Esophagus muscularis mucosa (tissue), 4 donors: ENCODE measurements at regions of chr4 and their contacts with region 1.

Region 1: GRCh38 chr4:15238720-15239119 is 189.1 kb upstream of the C1QTNF7 start:
- DNase-seq: no peak
- H3K4me3 ChIP-seq: no peak overlapping the region
- H3K27ac ChIP-seq: no peak overlapping the region
- H3K4me1 ChIP-seq: peaks cover 8 to 27% (median 19%) of the 10 kb centered on the region in 4 donors
- H3K27me3 ChIP-seq: no peaks in the 10 kb centered on the region
- CTCF ChIP-seq: peak; percentile 53 to 61 (median 58)
- EP300 ChIP-seq: no peak
- POLR2A ChIP-seq: no peak

Region 2: DNA sequence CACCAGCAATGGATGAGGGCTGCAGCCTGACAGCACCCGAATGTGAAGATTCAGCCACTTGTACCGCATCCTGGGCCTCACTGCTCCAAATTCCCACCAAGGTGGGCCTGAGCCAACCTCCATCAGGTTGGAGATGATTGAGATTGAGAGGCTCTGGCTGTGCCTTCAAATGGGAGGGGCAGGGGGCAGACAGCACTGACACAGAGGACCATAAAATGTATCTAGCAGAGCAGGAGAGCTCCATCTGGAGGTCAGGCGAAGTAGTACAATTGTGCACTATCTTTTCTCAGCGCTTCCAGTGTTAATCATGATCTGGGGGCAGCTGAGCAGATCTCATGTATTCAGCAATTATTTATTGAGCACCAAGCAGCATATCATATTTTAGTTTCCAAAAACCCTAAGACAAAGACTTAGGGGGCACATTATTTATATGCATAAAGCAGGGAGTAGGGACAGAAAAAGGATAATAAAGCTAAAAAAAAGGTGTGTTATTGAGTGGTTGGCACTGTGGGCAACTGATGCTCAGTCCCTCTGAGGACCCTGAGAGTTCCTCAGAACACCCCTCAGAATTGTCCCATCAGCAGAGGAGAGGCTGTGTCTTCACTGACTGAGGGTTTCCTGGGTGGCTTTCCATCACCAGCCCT is 157.6 kb after region 1 on chr4:
- intact Hi-C with region 1: loop called (anchors 2 kb)
- DNase-seq: no peak
- H3K4me3 ChIP-seq: no peak overlapping the region
- H3K27ac ChIP-seq: no peak overlapping the region
- H3K4me1 ChIP-seq: peaks cover 12 to 71% (median 44%) of the 10 kb centered on the region in 4 donors
- H3K27me3 ChIP-seq: no peaks in the 10 kb centered on the region
- CTCF ChIP-seq: peak; percentile 49 to 74 (median 50)
- EP300 ChIP-seq: no peak
- POLR2A ChIP-seq: no peak

Region 3: DNA sequence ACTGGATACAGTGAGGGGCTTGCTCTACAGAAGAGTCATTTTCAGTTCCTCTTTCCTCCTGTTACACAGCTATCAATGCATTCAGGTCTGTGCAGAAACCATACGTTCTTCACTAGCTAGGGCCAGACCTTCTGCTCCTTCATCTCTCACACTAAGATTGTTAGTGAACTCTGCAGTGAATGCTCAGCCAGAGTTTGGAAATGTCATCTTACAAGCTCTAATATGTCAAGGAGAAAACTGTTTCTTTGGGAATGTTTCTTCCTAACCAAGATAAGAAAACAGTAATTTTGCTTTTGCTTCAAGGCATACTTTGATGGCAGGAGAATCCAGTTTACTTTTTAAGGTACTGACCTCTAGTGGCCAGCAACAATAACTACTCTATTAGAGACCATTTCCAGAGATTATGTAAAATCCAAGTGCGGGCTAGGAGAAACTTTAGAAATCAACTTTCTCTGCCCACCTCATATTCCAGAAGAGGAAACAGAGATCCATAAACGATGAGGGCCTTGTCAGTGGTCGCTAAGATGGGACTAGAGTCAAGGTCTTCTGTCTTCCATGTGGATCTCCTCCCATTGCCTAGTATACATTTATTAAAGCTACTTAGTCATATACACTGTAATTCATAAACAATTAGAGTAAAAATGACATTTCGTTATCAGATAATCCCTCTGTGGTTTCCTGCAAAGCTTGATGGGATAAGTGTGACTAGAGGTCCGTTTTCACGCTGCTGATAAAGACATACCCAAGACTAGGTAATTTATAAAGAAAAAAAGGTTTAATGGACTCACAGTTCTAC is 218.9 kb after region 1 on chr4:
- intact Hi-C with region 1: loop called (anchors 2 kb)
- DNase-seq: peak; percentile 68
- H3K4me3 ChIP-seq: peak overlapping the region in 1 of 4 donors; percentile 13
- H3K27ac ChIP-seq: peak overlapping the region; percentile 48 to 69 (median 61)
- H3K4me1 ChIP-seq: peaks cover 17 to 38% (median 31%) of the 10 kb centered on the region in 4 donors
- H3K27me3 ChIP-seq: no peaks in the 10 kb centered on the region
- CTCF ChIP-seq: peak; percentile 75 to 76 (median 76)
- EP300 ChIP-seq: no peak
- POLR2A ChIP-seq: no peak